Prostate gland (tissue), 2 donors: ENCODE measurements at regions of chr20 and their contacts with region 1.

Region 1: DNA sequence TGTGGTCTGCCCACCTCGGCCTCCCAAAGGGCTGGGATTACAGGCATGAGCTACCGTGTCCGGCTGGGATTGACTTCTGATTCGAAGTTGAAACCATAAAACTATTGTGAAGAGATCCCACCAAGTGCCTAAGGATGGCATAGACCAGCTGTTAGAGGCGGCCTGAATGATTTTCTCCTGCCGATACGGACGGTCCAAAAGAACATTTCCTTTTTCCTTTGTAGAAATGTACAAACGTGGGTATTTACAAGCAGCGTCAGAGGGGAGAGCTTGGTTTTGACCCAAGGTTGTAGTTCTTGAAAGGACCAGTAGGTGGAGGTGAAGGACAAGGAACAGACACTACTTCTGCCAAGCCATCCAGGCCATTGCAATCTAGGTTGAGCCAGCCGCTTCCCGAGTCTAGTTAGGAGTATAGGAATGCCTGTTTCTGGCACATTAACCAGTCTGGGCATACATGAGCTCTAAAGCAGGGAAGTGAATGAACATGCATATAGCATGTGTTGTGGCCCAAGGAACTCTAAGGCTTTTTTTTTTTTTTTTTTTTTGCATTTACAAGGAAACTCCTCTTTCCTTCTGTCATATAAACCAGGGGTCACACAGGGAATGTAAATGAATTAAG is 29.1 kb downstream of the MOCS3 start:
- DNase-seq: peak; percentile 82
- H3K4me3 ChIP-seq: no peak overlapping the region
- H3K27ac ChIP-seq: peak overlapping the region in 1 of 2 donors; percentile 17
- H3K4me1 ChIP-seq: no peaks in the 10 kb centered on the region
- H3K27me3 ChIP-seq: no peaks in the 10 kb centered on the region
- CTCF ChIP-seq: peak; percentile 69 to 95 (median 80)
- POLR2A ChIP-seq: no peak

Region 2: DNA sequence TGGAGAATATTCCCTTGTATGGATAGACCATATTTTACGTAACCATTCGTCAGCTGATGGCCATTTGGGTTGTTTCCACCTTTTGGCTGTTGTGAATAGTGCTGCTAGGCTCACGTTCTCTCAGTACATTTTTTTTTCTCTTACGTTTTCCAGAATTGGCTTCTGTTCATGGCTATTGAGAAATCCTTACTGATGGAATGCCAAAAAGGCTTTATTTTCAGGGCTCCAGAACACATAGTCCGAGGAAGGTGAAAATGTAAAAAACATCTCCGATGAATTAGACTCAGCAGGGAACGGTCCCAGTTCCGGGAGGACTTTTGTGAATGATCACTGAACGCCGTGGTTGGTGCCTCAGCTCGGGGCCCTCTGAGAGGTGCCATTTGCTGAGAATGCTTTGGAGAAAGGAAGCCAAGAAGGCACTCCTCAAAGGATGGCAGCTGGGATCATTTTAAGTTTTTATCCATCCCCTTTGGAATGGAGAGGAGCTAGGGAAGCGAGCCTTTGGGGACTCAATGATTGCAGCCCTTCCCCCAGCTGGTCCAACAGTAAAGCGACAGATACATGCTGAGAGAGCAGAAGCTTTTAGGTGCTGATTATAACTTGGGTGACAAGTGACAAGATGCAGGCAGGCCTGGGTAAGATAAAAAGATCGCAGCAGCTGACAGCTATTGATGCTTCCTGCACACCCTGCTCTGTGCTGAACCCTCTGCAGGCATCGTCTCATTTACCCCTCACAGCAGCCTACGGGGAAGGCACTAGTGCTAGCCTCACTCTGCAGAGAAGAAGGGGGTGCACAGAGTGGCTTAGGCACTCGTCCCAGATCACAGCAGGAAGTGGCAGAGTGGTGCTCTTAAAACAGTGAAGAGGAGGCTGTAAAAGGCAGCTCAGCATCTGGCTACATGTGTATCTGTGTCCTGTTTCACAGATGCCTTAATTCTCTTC is 168.6 kb after region 1 on chr20:
- intact Hi-C with region 1: no loop called
- DNase-seq: no peak
- H3K4me3 ChIP-seq: no peak overlapping the region
- H3K27ac ChIP-seq: peak overlapping the region in 1 of 2 donors; percentile 10
- H3K4me1 ChIP-seq: no peaks in the 10 kb centered on the region
- H3K27me3 ChIP-seq: no peaks in the 10 kb centered on the region
- CTCF ChIP-seq: no peak
- POLR2A ChIP-seq: no peak

Region 3: DNA sequence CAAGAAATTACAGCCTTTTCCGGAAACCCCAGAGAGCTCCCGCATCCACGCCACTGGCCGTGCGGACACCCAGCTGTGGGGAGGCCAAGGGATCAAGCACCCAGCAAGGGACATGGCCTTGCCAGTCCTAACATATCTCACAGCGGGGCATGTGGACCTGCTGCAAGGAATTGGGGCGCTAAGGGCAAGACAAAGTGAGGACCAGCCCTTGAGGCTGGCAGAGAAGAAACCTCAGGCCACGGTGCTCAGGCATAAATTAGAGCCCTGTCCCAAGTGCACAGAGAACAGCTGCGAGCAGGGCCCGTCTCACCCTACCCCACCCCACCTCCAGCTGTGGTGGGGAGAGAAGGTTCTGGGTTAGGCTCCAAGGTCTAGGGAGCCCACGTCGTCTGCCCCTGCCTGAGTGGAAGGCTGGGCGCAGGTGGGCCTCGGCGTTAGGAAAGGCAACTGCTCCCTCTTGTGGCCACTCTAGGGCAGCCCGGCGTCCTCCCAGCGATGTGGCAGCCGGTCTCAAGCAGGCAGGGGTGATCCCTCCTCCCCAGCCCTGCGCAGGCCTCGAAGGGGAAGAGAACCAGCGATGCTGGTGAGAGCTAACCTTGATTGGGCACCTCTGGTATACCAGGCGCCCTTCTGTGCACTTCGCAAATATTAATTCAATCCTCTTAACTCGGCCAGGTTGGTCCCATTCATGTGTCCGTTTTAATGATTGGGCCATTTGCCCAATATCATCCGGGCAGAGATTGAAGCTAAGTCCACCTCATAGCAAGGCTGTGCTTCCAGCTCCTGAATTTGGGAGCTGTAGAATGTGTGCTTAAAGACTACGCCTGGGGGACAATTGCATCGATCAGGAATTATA is 319.0 kb after region 1 on chr20:
- intact Hi-C with region 1: loop called (anchors 2 kb)
- DNase-seq: peak; percentile 72
- H3K4me3 ChIP-seq: no peak overlapping the region
- H3K27ac ChIP-seq: no peak overlapping the region
- H3K4me1 ChIP-seq: no peaks in the 10 kb centered on the region
- H3K27me3 ChIP-seq: no peaks in the 10 kb centered on the region
- CTCF ChIP-seq: peak; percentile 80 to 95 (median 88)
- POLR2A ChIP-seq: no peak

Region 4: GRCh38 chr20:51595058-51595532 is 607.4 kb after region 1 on chr20:
- intact Hi-C with region 1: loop called (anchors 10 kb)
- DNase-seq: peak; percentile 87
- H3K4me3 ChIP-seq: no peak overlapping the region
- H3K27ac ChIP-seq: peak overlapping the region; percentile 46 to 54
- H3K4me1 ChIP-seq: no peaks in the 10 kb centered on the region
- H3K27me3 ChIP-seq: no peaks in the 10 kb centered on the region
- CTCF ChIP-seq: peak; percentile 52 to 93 (median 91)
- POLR2A ChIP-seq: no peak

Region 5: DNA sequence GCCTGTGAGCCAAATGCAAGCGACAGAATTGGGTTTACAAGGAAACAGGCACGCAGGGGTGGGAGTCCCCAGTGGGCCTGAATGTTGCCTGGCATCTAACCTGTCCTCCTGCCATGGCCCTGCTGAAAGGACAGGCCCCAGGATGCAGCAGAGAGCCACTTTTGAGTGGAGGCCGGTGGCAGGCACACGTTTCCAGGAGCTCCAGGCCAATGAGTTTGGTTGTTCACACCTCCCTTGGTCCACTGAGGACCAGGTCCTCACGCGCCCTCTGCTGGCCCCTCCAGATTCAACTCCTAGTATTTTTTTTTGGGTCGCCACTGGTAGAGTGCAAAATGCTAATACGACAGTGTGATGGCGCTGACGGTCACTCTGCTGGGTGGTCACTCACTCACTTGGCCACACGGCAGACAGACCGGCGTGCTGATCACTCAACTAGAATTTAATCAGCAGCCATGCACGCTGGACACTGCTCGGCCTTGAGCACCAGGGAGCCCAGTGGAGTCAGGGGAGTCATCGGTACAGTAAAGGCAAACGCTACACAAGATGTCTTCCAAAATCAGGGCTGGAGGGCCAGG is 636.5 kb after region 1 on chr20:
- intact Hi-C with region 1: loop called (anchors 10 kb)
- DNase-seq: peak; percentile 30
- H3K4me3 ChIP-seq: no peak overlapping the region
- H3K27ac ChIP-seq: no peak overlapping the region
- H3K4me1 ChIP-seq: no peaks in the 10 kb centered on the region
- H3K27me3 ChIP-seq: no peaks in the 10 kb centered on the region
- CTCF ChIP-seq: peak in 3 of 4 experiments; percentile 39 to 55 (median 50)
- POLR2A ChIP-seq: no peak

Region 6: DNA sequence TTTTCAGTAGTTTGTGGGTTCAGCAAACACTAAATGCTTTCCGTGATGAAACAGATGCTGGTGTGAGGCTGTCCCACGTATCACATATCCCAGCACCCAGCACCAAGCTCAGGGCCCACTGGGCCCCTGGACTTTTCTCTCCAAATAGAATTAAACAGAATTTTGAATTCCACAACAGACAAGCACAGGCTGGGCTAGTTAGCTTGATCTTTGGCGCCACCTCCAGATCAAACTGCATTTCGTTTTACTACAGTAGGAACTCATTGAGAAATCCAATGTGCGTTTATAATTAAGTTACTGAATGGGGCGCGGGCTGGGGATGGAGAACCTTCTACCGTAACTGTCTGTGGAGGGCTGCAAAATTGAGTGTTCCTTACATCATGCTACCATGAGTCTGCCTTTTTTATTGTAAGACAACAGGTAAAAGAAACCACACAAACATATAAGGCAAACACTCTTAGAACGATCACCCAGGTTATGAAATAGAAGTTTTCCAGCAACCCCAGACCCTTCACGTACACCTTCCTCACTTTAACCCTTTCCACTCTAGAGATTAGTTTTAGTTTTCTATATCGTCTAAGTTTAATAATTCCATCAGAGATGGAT is 1096.0 kb after region 1 on chr20:
- intact Hi-C with region 1: loop called (anchors 10 kb)
- DNase-seq: peak; percentile 43
- H3K4me3 ChIP-seq: no peak overlapping the region
- H3K27ac ChIP-seq: no peak overlapping the region
- H3K4me1 ChIP-seq: no peaks in the 10 kb centered on the region
- H3K27me3 ChIP-seq: no peaks in the 10 kb centered on the region
- CTCF ChIP-seq: peak in 3 of 4 experiments; percentile 41 to 64 (median 49)
- POLR2A ChIP-seq: no peak